Panc1 (cell line): ENCODE measurements at regions of chr5 and their contacts with region 1.

Region 1: GRCh38 chr5:153964880-153965645 is 73.6 kb downstream of the FAM114A2 start:
- DNase-seq: peak; percentile 45
- ATAC-seq: peak; percentile 87
- H3K4me3 ChIP-seq: peak overlapping the region in 1 of 2 experiments; percentile 29; a peak in 2 of 4 replicates
- H3K27ac ChIP-seq: no peak overlapping the region
- H3K4me1 ChIP-seq: no peaks in the 10 kb centered on the region
- H3K27me3 ChIP-seq: peaks cover 6% of the 10 kb centered on the region
- CTCF ChIP-seq: peak; percentile 92

Region 2: GRCh38 chr5:152532714-152533113 is 1432.3 kb before region 1 on chr5:
- CTCF ChIA-PET with region 1: interaction called, 11 read pairs
- POLR2A ChIA-PET with region 1: interaction called, 13 read pairs
- in situ Hi-C with region 1: no loop called
- intact Hi-C with region 1: loop called (anchors 1 kb)
- DNase-seq: peak; percentile 27
- ATAC-seq: peak; percentile 86
- H3K4me3 ChIP-seq: no peak overlapping the region
- H3K27ac ChIP-seq: no peak overlapping the region
- H3K4me1 ChIP-seq: no peaks in the 10 kb centered on the region
- H3K27me3 ChIP-seq: peaks cover 2% of the 10 kb centered on the region; the same call in 1 of the 2 replicates
- CTCF ChIP-seq: peak; percentile 55

Region 3: DNA sequence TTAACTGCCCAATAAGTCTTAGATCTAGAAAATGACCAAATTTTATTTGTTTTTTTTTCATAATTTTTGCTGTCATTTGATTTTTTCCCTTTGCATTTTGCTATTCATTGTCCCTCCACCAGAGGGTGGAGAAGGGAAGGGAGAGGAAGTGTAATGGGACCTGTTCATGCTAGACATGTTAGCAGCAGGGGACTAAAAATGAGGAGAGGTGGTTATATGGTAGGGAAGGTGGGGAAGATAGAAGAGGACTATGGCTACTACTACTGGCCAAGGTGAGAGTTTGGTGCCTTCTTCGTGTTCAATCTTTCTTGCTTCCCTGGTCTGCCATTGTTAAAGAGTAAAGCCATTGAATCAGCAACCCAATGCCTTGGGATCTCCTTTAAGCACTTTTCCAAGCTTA is 468.2 kb before region 1 on chr5:
- CTCF ChIA-PET with region 1: interaction called, 7 read pairs
- POLR2A ChIA-PET with region 1: no interaction called
- in situ Hi-C with region 1: no loop called
- intact Hi-C with region 1: loop called (anchors 1 kb)
- DNase-seq: peak; percentile 8
- ATAC-seq: no peak
- H3K4me3 ChIP-seq: no peak overlapping the region
- H3K27ac ChIP-seq: no peak overlapping the region
- H3K4me1 ChIP-seq: no peaks in the 10 kb centered on the region
- H3K27me3 ChIP-seq: peaks cover 2% of the 10 kb centered on the region; the same call in 1 of the 2 replicates
- CTCF ChIP-seq: peak; percentile 51

Region 4: DNA sequence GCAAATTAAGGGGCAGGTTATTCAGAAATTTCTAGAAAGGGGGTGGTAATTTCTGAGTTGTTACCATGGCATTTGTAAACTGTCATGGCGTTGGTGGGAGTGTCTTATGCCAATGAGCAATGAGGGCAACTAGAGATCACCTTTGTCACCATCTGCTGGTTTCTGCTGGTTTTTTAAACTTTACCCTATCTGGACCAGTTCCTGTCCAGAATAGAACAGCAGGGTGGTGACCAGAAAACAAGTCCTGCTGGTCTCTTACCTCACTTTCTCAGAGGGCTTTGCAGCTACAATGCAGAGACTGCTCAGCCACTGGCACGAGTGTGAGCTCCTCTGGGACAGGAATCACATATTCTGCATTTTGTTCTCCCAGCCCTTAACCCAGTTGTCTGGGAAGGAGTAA is 22.2 kb after region 1 on chr5:
- CTCF ChIA-PET with region 1: no interaction called
- POLR2A ChIA-PET with region 1: no interaction called
- in situ Hi-C with region 1: no loop called
- intact Hi-C with region 1: no loop called
- DNase-seq: no peak
- ATAC-seq: no peak
- H3K4me3 ChIP-seq: no peak overlapping the region
- H3K27ac ChIP-seq: no peak overlapping the region
- H3K4me1 ChIP-seq: no peaks in the 10 kb centered on the region
- H3K27me3 ChIP-seq: no peaks in the 10 kb centered on the region
- CTCF ChIP-seq: no peak

Region 5: GRCh38 chr5:154025951-154026350 is 60.9 kb after region 1 on chr5:
- CTCF ChIA-PET with region 1: no interaction called
- POLR2A ChIA-PET with region 1: no interaction called
- in situ Hi-C with region 1: no loop called
- intact Hi-C with region 1: no loop called
- DNase-seq: no peak
- ATAC-seq: no peak
- H3K4me3 ChIP-seq: no peak overlapping the region
- H3K27ac ChIP-seq: no peak overlapping the region
- H3K4me1 ChIP-seq: no peaks in the 10 kb centered on the region
- H3K27me3 ChIP-seq: no peaks in the 10 kb centered on the region
- CTCF ChIP-seq: no peak